B cell (primary cell): ENCODE measurements at regions of chr2 and their contacts with region 1.

Region 1: DNA sequence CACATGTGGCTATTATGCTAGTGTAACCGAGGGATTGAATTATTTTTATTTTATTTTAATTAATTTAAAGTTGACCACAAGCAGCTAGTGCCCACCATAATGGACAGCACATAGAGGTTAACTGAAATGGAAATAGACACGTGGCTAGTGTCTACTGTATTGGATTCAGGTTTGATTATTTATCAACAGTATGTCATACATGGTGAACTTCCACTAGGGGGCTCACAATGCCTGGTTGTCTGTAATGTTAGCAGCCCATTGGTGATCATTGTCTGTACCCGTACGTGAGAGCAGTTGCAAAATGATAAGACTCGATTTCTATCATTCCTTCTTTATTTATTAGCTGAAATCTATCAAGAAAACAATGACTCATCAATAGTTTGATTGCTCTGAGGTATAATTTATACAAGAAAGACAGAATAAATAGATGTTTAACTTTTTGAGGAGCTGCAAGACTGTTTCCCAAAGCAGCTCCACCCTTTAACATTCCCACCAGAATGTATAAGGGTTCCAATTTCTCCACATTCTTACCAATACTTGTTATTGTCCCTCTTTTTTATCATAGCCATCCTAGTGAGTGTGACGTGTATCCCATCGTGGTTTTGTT is 76.5 kb downstream of the CYBRD1 start:
- DNase-seq: peak; percentile 65
- ATAC-seq: peak; percentile 98
- H3K4me3 ChIP-seq: no peak overlapping the region
- H3K4me3 Mint-ChIP-seq: no peak overlapping the region
- H3K27ac ChIP-seq: no peak overlapping the region
- H3K27ac Mint-ChIP-seq: no peak overlapping the region
- H3K4me1 ChIP-seq: no peaks in the 10 kb centered on the region
- H3K4me1 Mint-ChIP-seq: peaks cover 1% of the 10 kb centered on the region
- H3K27me3 ChIP-seq: peaks cover 0 to 6% (median 1%) of the 10 kb centered on the region in 4 experiments
- H3K27me3 Mint-ChIP-seq: peaks cover 19% of the 10 kb centered on the region
- CTCF ChIP-seq: peak; percentile 97

Region 2: DNA sequence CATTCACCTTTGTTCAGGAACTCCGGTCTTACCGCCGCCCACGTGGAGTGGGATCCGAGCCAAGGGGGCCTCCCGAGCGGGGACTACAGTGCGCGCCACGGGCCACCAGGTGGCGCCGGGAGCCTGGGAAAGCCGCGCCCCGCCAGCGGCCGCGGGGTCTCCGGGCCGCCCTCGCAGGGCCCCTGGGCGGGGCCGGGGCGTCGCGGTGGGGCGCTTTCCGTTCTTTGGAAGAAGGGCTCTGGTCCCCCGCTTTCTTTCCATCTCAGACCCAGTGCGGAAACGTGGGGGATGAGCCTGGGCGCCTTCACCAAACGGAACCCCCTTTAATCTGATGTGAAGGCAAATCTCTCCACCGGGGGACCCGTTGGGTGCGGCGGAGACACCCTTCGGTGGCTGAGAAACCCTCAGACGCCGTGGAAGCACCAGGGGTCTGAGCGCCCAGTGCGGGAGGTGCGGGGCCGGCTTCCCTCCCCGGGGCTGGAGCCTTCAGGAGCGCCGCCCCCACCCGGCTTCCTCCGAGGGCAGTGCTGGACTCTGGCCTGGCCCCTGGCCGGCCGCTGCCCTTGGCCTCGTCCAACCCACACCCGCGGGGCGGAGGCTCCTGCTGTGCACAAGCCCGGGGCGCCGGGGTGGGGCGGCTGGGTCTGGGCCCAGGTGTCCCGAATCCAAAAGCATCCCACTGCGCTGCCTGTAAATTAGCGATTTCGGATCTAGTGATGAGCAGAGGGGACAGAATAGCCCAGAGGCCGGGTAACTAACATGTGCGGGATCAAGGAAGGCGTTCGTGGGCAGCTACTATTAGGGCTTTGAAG is 625.1 kb before region 1 on chr2:
- CTCF ChIA-PET with region 1: no interaction called
- POLR2A ChIA-PET with region 1: no interaction called
- intact Hi-C with region 1: loop called (anchors 5 kb)
- DNase-seq: peak; percentile 92
- ATAC-seq: peak; percentile 97
- H3K4me3 ChIP-seq: peak overlapping the region; percentile 43 to 86 (median 80)
- H3K4me3 Mint-ChIP-seq: peak overlapping the region; percentile 92
- H3K27ac ChIP-seq: peak overlapping the region; percentile 42 to 61
- H3K27ac Mint-ChIP-seq: peak overlapping the region; percentile 78
- H3K4me1 ChIP-seq: peaks cover 11 to 12% of the 10 kb centered on the region in 2 donors
- H3K4me1 Mint-ChIP-seq: peaks cover 12% of the 10 kb centered on the region
- H3K27me3 ChIP-seq: no peaks in the 10 kb centered on the region
- H3K27me3 Mint-ChIP-seq: no peaks in the 10 kb centered on the region
- CTCF ChIP-seq: peak; percentile 94

Region 3: DNA sequence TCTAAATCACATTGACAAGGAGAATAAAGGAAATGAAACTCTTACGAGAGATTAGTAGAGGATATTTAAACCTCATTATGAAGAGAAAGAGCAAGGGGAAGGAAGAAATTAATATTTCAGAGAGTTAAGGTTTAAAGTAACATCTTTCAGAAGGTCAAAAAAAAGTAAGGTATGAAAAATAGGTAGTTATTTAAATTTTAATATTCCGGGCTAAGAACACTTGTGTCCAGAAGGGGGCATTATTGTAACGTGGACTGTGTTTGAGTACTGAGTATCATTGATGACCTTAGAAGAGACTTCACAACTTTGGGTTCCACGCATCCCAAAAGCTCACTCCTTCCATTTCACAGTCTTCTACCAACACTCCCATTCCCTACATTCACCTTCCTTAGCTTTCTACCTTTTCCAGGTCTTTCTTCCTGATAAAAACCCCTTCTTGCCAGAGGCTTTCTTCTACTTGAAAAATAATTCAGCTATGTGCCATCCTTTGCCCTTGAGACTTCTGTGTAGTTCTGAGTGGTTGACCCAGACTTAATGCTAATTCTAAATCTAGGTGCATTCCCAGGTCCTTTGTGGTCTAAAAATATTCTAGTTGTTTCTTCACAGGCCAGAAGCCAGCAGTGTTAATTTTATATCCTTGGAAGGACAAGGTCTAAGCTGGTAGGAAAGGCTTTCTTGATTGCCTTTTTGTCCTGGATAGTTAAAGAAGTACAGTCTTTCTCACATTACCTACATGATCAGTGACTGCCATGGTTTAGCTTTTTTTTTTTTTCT is 104.9 kb after region 1 on chr2:
- CTCF ChIA-PET with region 1: interaction called, 6 read pairs
- POLR2A ChIA-PET with region 1: no interaction called
- intact Hi-C with region 1: loop called (anchors 1 kb)
- DNase-seq: peak; percentile 52
- ATAC-seq: no peak
- H3K4me3 ChIP-seq: no peak overlapping the region
- H3K4me3 Mint-ChIP-seq: no peak overlapping the region
- H3K27ac ChIP-seq: no peak overlapping the region
- H3K27ac Mint-ChIP-seq: peak overlapping the region; percentile 81
- H3K4me1 ChIP-seq: peaks cover 7 to 8% of the 10 kb centered on the region in 2 donors
- H3K4me1 Mint-ChIP-seq: peaks cover 10% of the 10 kb centered on the region
- H3K27me3 ChIP-seq: no peaks in the 10 kb centered on the region
- H3K27me3 Mint-ChIP-seq: no peaks in the 10 kb centered on the region
- CTCF ChIP-seq: peak; percentile 71

Region 4: GRCh38 chr2:171735991-171736710 is 137.3 kb after region 1 on chr2:
- CTCF ChIA-PET with region 1: no interaction called
- POLR2A ChIA-PET with region 1: no interaction called
- intact Hi-C with region 1: no loop called
- DNase-seq: no peak
- ATAC-seq: no peak
- H3K4me3 ChIP-seq: no peak overlapping the region
- H3K4me3 Mint-ChIP-seq: no peak overlapping the region
- H3K27ac ChIP-seq: no peak overlapping the region
- H3K27ac Mint-ChIP-seq: no peak overlapping the region
- H3K4me1 ChIP-seq: peaks cover 5 to 6% of the 10 kb centered on the region in 2 donors
- H3K4me1 Mint-ChIP-seq: peaks cover 5% of the 10 kb centered on the region
- H3K27me3 ChIP-seq: no peaks in the 10 kb centered on the region
- H3K27me3 Mint-ChIP-seq: no peaks in the 10 kb centered on the region
- CTCF ChIP-seq: no peak

Region 5: GRCh38 chr2:172113617-172114016 is 514.8 kb after region 1 on chr2:
- CTCF ChIA-PET with region 1: interaction called, 7 read pairs
- POLR2A ChIA-PET with region 1: no interaction called
- intact Hi-C with region 1: loop called (anchors 2 kb)
- DNase-seq: peak; percentile 14
- ATAC-seq: no peak
- H3K4me3 ChIP-seq: no peak overlapping the region
- H3K4me3 Mint-ChIP-seq: no peak overlapping the region
- H3K27ac ChIP-seq: no peak overlapping the region
- H3K27ac Mint-ChIP-seq: no peak overlapping the region
- H3K4me1 ChIP-seq: peaks cover 3 to 5% of the 10 kb centered on the region in 2 donors
- H3K4me1 Mint-ChIP-seq: peaks cover 2% of the 10 kb centered on the region
- H3K27me3 ChIP-seq: peaks cover 0 to 30% (median 18%) of the 10 kb centered on the region in 4 experiments
- H3K27me3 Mint-ChIP-seq: peaks cover 41% of the 10 kb centered on the region
- CTCF ChIP-seq: no peak

Region 6: GRCh38 chr2:172131713-172132555 is 533.1 kb after region 1 on chr2:
- CTCF ChIA-PET with region 1: interaction called, 9 read pairs
- POLR2A ChIA-PET with region 1: no interaction called
- intact Hi-C with region 1: loop called (anchors 1 kb)
- DNase-seq: no peak
- ATAC-seq: no peak
- H3K4me3 ChIP-seq: no peak overlapping the region
- H3K4me3 Mint-ChIP-seq: no peak overlapping the region
- H3K27ac ChIP-seq: no peak overlapping the region
- H3K27ac Mint-ChIP-seq: no peak overlapping the region
- H3K4me1 ChIP-seq: no peaks in the 10 kb centered on the region
- H3K4me1 Mint-ChIP-seq: no peaks in the 10 kb centered on the region
- H3K27me3 ChIP-seq: no peaks in the 10 kb centered on the region
- H3K27me3 Mint-ChIP-seq: peaks cover 15% of the 10 kb centered on the region
- CTCF ChIP-seq: no peak

Region 7: GRCh38 chr2:172931918-172932520 is 1333.2 kb after region 1 on chr2:
- CTCF ChIA-PET with region 1: no interaction called
- POLR2A ChIA-PET with region 1: no interaction called
- intact Hi-C with region 1: loop called (anchors 10 kb)
- DNase-seq: peak; percentile 55
- ATAC-seq: no peak
- H3K4me3 ChIP-seq: no peak overlapping the region
- H3K4me3 Mint-ChIP-seq: no peak overlapping the region
- H3K27ac ChIP-seq: no peak overlapping the region
- H3K27ac Mint-ChIP-seq: no peak overlapping the region
- H3K4me1 ChIP-seq: no peaks in the 10 kb centered on the region
- H3K4me1 Mint-ChIP-seq: no peaks in the 10 kb centered on the region
- H3K27me3 ChIP-seq: peaks cover 0 to 5% (median 3%) of the 10 kb centered on the region in 4 experiments
- H3K27me3 Mint-ChIP-seq: peaks cover 33% of the 10 kb centered on the region
- CTCF ChIP-seq: peak; percentile 73